B cell (primary cell): ENCODE measurements at regions of chr13 and their contacts with region 1.

Region 1: GRCh38 chr13:80048802-80049201 is 292.1 kb downstream of the SPRY2 start:
- DNase-seq: peak; percentile 72
- ATAC-seq: peak; percentile 95
- H3K4me3 ChIP-seq: no peak overlapping the region
- H3K4me3 Mint-ChIP-seq: peak overlapping the region; percentile 37
- H3K27ac ChIP-seq: no peak overlapping the region
- H3K27ac Mint-ChIP-seq: peak overlapping the region; percentile 54
- H3K4me1 ChIP-seq: peaks cover 18 to 20% of the 10 kb centered on the region in 2 donors
- H3K4me1 Mint-ChIP-seq: peaks cover 27% of the 10 kb centered on the region
- H3K27me3 ChIP-seq: no peaks in the 10 kb centered on the region
- H3K27me3 Mint-ChIP-seq: no peaks in the 10 kb centered on the region
- CTCF ChIP-seq: no peak

Region 2: GRCh38 chr13:79810669-79811068 is 238.1 kb before region 1 on chr13:
- CTCF ChIA-PET with region 1: no interaction called
- POLR2A ChIA-PET with region 1: no interaction called
- intact Hi-C with region 1: loop called (anchors 10 kb)
- DNase-seq: no peak
- ATAC-seq: no peak
- H3K4me3 ChIP-seq: no peak overlapping the region
- H3K4me3 Mint-ChIP-seq: no peak overlapping the region
- H3K27ac ChIP-seq: no peak overlapping the region
- H3K27ac Mint-ChIP-seq: no peak overlapping the region
- H3K4me1 ChIP-seq: peaks cover 20% of the 10 kb centered on the region in 2 donors
- H3K4me1 Mint-ChIP-seq: peaks cover 28% of the 10 kb centered on the region
- H3K27me3 ChIP-seq: no peaks in the 10 kb centered on the region
- H3K27me3 Mint-ChIP-seq: no peaks in the 10 kb centered on the region
- CTCF ChIP-seq: no peak

Region 3: GRCh38 chr13:80477661-80478443 is 429.1 kb after region 1 on chr13:
- CTCF ChIA-PET with region 1: no interaction called
- POLR2A ChIA-PET with region 1: no interaction called
- intact Hi-C with region 1: no loop called
- DNase-seq: no peak
- ATAC-seq: no peak
- H3K4me3 ChIP-seq: no peak overlapping the region
- H3K4me3 Mint-ChIP-seq: no peak overlapping the region
- H3K27ac ChIP-seq: no peak overlapping the region
- H3K27ac Mint-ChIP-seq: no peak overlapping the region
- H3K4me1 ChIP-seq: no peaks in the 10 kb centered on the region
- H3K4me1 Mint-ChIP-seq: peaks cover 5% of the 10 kb centered on the region
- H3K27me3 ChIP-seq: no peaks in the 10 kb centered on the region
- H3K27me3 Mint-ChIP-seq: no peaks in the 10 kb centered on the region
- CTCF ChIP-seq: no peak